ENCODE measurements at regions of chrX and their contacts with region 1.

Region 1: DNA sequence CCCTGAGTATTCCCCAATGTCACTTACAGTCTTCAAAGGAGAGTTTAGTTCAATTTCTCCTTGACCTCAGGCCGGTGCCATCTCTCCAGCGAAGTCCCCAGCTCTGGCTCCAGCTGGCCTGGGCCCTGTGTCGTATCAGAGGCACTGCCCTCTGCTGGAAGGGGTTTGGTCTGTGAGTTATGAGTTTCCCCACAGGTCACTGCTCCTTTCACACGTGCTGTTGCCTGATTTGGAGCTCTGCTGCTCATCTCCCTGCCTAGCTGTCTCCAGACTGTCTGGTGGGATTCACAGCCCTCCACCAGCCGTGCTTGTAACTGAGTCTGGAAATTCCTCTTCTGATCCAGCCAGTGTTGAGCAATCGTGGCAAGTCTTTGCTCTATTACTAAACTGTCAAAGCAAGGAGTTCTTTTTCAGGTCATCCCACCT is at the start of gene RAP2C:
- DNase-seq: peak; percentile 76
- ATAC-seq: peak; percentile 33
- H3K4me3 Mint-ChIP-seq: peak within 1 kb of the TSS; percentile 87
- H3K27ac Mint-ChIP-seq: peak within 1 kb of the TSS; percentile 92
- H3K4me1 Mint-ChIP-seq: peaks cover 13% of the 10 kb centered on the region
- H3K27me3 Mint-ChIP-seq: no peaks in the 10 kb centered on the region
- total RNA-seq, gene RAP2C: 28.3 to 31.3 TPM

Region 2: DNA sequence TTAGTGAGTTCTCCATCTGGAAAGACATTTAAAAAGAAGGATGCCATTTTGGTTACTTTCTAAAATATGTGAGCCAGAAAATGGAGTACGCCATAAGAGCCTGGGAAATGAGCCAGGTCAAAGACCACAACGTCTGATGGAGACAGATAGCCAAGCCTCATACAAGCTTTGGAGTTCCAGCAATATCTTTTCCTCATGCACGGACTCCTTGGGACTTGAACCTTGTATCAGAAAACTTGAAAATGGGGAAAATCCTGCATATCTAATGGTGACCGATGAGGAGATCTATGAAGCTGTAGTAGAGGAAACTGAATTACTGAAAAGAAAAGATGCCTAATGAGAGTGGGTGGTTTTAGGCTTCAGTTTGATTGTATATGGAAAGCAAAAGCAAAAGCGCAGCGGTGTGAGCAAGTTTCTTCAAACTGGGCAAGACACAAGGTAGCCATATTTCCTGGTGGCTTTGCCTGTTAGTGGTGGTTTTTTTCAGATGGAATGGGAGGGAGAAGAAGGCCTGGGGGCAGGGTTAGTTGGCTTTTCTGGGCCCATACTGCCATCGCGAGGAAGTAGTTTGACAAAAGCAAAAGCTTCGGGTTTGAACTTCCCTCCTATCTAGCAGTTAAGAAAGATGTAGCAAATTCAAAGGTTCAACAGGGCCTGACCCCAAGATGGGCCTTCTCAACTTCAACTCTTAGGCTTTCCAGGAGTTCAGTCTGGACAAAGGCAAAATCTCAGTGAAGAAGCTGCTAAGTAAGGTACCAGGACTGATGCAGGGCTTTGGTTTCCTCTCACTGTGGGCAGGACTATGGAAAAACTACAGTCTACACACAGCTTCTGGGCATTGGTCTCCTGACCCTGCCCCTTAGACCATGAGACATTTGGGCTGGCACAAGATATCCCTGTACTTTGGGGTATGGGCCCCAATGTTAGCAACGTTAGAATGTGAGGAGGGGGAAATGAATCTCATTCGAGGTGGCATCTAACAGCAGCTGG is 406.2 kb before region 1 on chrX:
- CTCF ChIA-PET with region 1: no interaction called
- POLR2A ChIA-PET with region 1: no interaction called
- intact Hi-C with region 1: loop called in 1 of 2 experiments (anchors 5 kb)
- DNase-seq: peak; percentile 70
- ATAC-seq: peak; percentile 89
- H3K4me3 Mint-ChIP-seq: peak overlapping the region; percentile 67
- H3K27ac Mint-ChIP-seq: peak overlapping the region; percentile 86
- H3K4me1 Mint-ChIP-seq: peaks cover 29% of the 10 kb centered on the region
- H3K27me3 Mint-ChIP-seq: no peaks in the 10 kb centered on the region

Region 3: DNA sequence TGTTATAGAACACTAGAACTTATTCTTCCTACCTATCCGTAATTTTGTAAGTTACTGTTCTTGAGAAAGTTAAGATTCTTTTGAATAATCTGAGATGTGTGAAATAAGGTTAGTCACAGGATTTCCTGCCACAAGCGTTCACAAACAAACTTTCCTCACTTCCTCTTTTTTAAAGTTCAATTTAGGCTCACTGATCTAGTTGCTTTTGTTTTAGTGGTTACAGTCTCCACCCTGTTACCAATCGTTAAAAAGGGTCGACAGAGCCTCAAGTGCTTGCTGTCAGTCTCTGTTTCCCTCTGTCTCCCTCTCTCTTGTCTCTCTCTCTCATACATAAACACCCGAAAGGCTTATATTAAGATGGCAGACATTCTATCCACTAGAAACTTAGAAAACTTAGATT is 232.1 kb before region 1 on chrX:
- CTCF ChIA-PET with region 1: interaction called, 3 read pairs
- POLR2A ChIA-PET with region 1: no interaction called
- intact Hi-C with region 1: loop called in 1 of 2 experiments (anchors 10 kb)
- DNase-seq: no peak
- ATAC-seq: peak; percentile 76
- H3K4me3 Mint-ChIP-seq: peak overlapping the region; percentile 54
- H3K27ac Mint-ChIP-seq: peak overlapping the region; percentile 92
- H3K4me1 Mint-ChIP-seq: peaks cover 62% of the 10 kb centered on the region
- H3K27me3 Mint-ChIP-seq: no peaks in the 10 kb centered on the region

Region 4: GRCh38 chrX:132171478-132172260 is 47.7 kb before region 1 on chrX:
- CTCF ChIA-PET with region 1: no interaction called
- POLR2A ChIA-PET with region 1: no interaction called
- intact Hi-C with region 1: loop called in 1 of 2 experiments (anchors 2 kb)
- DNase-seq: no peak
- ATAC-seq: no peak
- H3K4me3 Mint-ChIP-seq: no peak overlapping the region
- H3K27ac Mint-ChIP-seq: no peak overlapping the region
- H3K4me1 Mint-ChIP-seq: no peaks in the 10 kb centered on the region
- H3K27me3 Mint-ChIP-seq: no peaks in the 10 kb centered on the region

Region 5: GRCh38 chrX:132277953-132278614 is 58.7 kb after region 1 on chrX:
- CTCF ChIA-PET with region 1: no interaction called
- POLR2A ChIA-PET with region 1: no interaction called
- intact Hi-C with region 1: no loop called
- DNase-seq: no peak
- ATAC-seq: no peak
- H3K4me3 Mint-ChIP-seq: no peak overlapping the region
- H3K27ac Mint-ChIP-seq: no peak overlapping the region
- H3K4me1 Mint-ChIP-seq: no peaks in the 10 kb centered on the region
- H3K27me3 Mint-ChIP-seq: no peaks in the 10 kb centered on the region

Region 6: DNA sequence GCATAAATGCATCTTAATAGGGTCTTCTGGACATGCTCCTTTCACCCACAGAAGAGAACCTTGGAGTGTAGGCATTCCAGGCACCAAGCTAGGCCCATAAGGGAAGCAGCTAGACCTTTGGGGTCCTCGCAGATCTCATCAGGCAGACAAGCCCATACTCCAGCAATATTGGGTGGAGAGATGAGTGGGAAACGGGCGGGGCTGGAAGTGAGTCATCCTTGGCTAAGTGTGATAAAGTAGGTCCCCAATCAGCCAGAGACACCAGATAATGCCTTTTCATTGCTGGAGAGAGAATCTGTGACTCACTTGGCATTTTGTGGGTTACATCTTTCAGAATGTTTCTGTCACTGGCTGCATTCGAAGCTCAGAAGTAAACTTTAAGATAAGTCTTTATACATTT is 402.8 kb after region 1 on chrX:
- CTCF ChIA-PET with region 1: interaction called, 4 read pairs
- POLR2A ChIA-PET with region 1: no interaction called
- intact Hi-C with region 1: loop called in 1 of 2 experiments (anchors 5 kb)
- DNase-seq: peak; percentile 79
- ATAC-seq: peak; percentile 100
- H3K4me3 Mint-ChIP-seq: no peak overlapping the region
- H3K27ac Mint-ChIP-seq: peak overlapping the region; percentile 74
- H3K4me1 Mint-ChIP-seq: peaks cover 9% of the 10 kb centered on the region
- H3K27me3 Mint-ChIP-seq: no peaks in the 10 kb centered on the region